CD14-positive monocyte (primary cell): ENCODE measurements at regions of chr16 and their contacts with region 1.

Region 1: GRCh38 chr16:21626659-21627277 is 25.6 kb downstream of the IGSF6 start:
- DNase-seq: peak; percentile 93 to 98 (median 98)
- H3K4me3 ChIP-seq: peak overlapping the region in 1 of 3 experiments; percentile 44
- H3K4me3 Mint-ChIP-seq: peak overlapping the region; percentile 24 to 80
- H3K27ac ChIP-seq: peak overlapping the region; percentile 62 to 87
- H3K27ac Mint-ChIP-seq: peak overlapping the region; percentile 93 to 99 (median 98)
- H3K4me1 ChIP-seq: peaks cover 56 to 69% of the 10 kb centered on the region in 2 donors
- H3K4me1 Mint-ChIP-seq: peaks cover 68% of the 10 kb centered on the region
- H3K27me3 ChIP-seq: no peaks in the 10 kb centered on the region
- H3K27me3 Mint-ChIP-seq: peaks cover 0 to 2% (median 0%) of the 10 kb centered on the region in 3 donors
- CTCF ChIP-seq: no peak

Region 2: GRCh38 chr16:20879175-20880040 is 747.4 kb before region 1 on chr16:
- intact Hi-C with region 1: no loop called
- DNase-seq: peak in 1 of 3 donors; percentile 51
- H3K4me3 ChIP-seq: no peak overlapping the region
- H3K4me3 Mint-ChIP-seq: no peak overlapping the region
- H3K27ac ChIP-seq: peak overlapping the region in 1 of 2 donors; percentile 13
- H3K27ac Mint-ChIP-seq: peak overlapping the region in 1 of 7 donors; percentile 11
- H3K4me1 ChIP-seq: peaks cover 16 to 25% of the 10 kb centered on the region in 2 donors
- H3K4me1 Mint-ChIP-seq: peaks cover 45% of the 10 kb centered on the region
- H3K27me3 ChIP-seq: no peaks in the 10 kb centered on the region
- H3K27me3 Mint-ChIP-seq: no peaks in the 10 kb centered on the region
- CTCF ChIP-seq: no peak

Region 3: DNA sequence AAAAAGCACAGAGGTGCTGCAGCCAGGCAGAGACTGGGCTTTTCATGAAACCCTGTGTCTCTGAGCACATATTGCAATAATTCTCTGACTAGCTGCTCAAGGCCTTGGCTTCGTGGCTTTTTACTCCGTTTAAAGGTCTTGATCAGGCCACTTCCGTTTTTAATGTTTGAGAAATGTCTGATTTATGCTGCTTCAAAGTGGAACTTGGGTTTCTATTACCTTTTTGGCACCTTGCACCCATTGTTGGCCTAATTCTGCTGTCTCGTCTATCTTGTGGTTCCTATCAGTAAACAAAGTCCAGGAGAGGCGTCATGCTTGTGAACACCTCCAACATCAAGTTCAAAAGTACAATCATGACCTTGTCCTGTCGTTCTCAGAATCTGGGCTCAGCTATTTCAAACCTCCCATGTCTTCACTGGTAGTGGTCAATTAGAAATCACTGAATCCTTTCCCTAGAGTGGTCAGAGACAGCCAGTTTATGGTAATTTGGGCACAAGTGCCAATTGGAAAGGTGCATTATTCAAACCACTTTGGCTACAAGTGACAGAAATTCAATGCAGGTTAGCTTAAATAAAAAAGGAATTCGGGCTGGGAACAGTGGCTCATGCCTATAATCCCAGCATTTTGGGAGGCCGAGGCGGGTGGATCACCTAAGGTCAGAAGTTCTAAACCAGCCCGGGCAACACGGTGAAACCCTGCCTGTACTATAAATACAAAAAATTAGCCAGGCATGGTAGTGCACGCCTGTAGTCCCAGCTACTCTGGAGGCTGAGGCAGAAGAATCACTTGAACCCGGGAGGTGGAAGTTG is 60.7 kb before region 1 on chr16:
- intact Hi-C with region 1: no loop called
- DNase-seq: peak in 1 of 3 donors; percentile 26
- H3K4me3 ChIP-seq: no peak overlapping the region
- H3K4me3 Mint-ChIP-seq: no peak overlapping the region
- H3K27ac ChIP-seq: no peak overlapping the region
- H3K27ac Mint-ChIP-seq: peak overlapping the region in 1 of 7 donors; percentile 3
- H3K4me1 ChIP-seq: peaks cover 6 to 9% of the 10 kb centered on the region in 2 donors
- H3K4me1 Mint-ChIP-seq: peaks cover 10% of the 10 kb centered on the region
- H3K27me3 ChIP-seq: no peaks in the 10 kb centered on the region
- H3K27me3 Mint-ChIP-seq: peaks cover 0 to 8% (median 7%) of the 10 kb centered on the region in 3 donors
- CTCF ChIP-seq: no peak

Region 4: GRCh38 chr16:21590287-21590686 is 36.5 kb before region 1 on chr16:
- intact Hi-C with region 1: loop called (anchors 5 kb)
- DNase-seq: peak; percentile 71 to 93 (median 81)
- H3K4me3 ChIP-seq: peak overlapping the region in 1 of 3 experiments; percentile 53
- H3K4me3 Mint-ChIP-seq: peak overlapping the region in 1 of 2 donors; percentile 68
- H3K27ac ChIP-seq: peak overlapping the region; percentile 84 to 88
- H3K27ac Mint-ChIP-seq: peak overlapping the region; percentile 89 to 96 (median 94)
- H3K4me1 ChIP-seq: peaks cover 71 to 81% of the 10 kb centered on the region in 2 donors
- H3K4me1 Mint-ChIP-seq: peaks cover 70% of the 10 kb centered on the region
- H3K27me3 ChIP-seq: no peaks in the 10 kb centered on the region
- H3K27me3 Mint-ChIP-seq: peaks cover 0 to 3% (median 0%) of the 10 kb centered on the region in 3 donors
- CTCF ChIP-seq: no peak